Heart left ventricle (tissue), 16 donors: ENCODE measurements at regions of chr18 and their contacts with region 1.

Region 1: DNA sequence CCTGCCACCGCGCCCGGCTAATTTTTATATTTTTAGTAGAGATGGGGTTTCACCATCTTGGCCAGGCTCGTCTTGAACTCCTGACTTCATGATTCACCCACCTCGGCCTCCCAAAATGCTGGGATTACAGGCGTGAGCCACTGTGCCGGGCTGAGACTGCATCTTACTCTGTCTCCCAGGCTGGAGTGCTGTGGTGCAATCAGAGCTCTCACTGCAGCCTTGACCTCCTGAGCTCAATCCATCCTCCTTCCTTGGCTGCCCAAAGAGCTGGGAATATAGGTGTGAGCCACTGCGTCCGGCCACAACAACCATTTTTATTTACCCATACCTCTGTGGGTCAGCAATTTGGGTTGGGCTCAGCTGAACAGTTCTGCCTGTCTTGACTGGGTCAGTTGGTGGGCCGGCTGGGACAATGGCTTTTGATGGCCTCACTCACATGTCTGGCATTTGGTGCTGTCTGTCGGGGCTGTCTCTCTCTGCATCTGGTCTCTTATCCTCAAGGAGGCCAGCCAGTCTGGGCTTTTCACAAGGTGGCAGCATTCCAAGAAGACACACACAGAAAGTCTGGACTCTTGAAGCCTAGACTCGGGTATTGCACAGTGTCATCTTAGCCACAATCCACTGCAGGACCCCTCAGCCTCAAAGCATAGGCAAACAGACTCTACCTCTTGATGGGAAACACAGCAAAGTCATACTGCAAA is 116.8 kb upstream of the GATA6 start:
- DNase-seq: no peak
- ATAC-seq: no peak
- H3K4me3 ChIP-seq: no peak overlapping the region
- H3K27ac ChIP-seq: no peak overlapping the region
- H3K4me1 ChIP-seq: no peaks in the 10 kb centered on the region
- H3K27me3 ChIP-seq: no peaks in the 10 kb centered on the region
- CTCF ChIP-seq: no peak
- POLR2A ChIP-seq: no peak

Region 2: DNA sequence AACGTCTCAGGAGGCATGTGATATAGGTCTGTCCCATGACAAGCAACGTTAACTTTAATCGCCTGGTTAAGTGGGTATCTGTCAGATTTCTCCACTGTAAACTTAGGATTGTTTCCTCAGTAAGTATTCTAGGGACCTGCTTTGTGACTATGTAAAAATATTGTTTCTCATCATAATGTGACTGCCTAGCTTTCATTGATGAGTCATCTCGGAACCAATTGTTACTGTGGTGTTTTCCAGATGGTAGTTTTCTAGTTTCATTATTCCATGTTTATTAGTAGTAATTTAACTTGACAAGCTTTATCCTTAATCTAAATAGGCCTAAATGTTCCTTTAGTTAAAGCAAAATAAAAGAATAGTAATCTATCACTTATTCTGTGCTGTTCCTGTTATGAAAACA is 88.7 kb after region 1 on chr18:
- intact Hi-C with region 1: loop called in 1 of 10 experiments (anchors 10 kb)
- DNase-seq: no peak
- ATAC-seq: no peak
- H3K4me3 ChIP-seq: no peak overlapping the region
- H3K27ac ChIP-seq: no peak overlapping the region
- H3K4me1 ChIP-seq: no peaks in the 10 kb centered on the region
- H3K27me3 ChIP-seq: no peaks in the 10 kb centered on the region
- CTCF ChIP-seq: no peak
- POLR2A ChIP-seq: no peak